B cell (primary cell): ENCODE measurements at regions of chr5 and their contacts with region 1.

Region 1: DNA sequence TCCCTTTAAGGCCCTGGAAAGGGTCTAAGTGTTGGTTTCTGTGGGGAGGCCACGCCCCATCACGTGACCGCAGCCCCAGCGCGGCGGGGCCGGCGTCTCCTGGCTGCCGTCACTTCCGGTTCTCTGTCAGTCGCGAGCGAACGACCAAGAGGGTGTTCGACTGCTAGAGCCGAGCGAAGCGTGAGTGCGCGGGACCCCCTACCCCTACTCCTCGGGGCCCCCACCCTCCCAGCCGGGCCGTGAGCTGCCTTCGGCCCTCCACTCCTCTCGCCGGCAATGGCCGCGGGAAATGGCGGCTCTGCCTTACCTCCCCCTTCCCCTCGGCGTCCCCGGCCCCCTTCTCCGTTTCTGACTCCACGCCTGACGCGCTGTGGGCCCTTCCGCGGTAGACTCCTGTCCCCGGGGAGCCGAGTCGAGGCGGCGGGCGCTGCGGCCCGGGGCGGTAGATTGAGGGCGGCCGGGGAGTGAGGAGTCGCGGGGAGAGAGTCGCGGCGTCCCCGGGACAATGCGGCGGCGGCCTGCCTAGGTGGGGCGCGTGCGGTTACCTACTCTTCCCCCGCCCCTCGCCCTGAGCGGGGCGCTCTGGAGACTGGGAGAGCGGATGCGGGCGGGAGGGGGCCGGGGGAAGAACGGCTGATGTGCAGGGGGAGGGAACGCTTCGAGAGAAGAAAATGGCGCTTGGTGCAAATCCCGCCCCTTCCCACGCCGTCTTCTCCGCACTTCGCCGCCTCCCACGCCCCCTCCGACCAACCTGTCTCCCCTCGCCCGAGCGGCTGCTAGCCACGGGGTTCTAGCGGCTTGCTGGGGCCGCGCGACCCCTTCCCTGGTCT is at the start of gene SUB1:
- DNase-seq: peak; percentile 94
- ATAC-seq: peak; percentile 64
- H3K4me3 ChIP-seq: peak within 1 kb of the TSS; percentile 83 to 93 (median 86)
- H3K4me3 Mint-ChIP-seq: peak within 1 kb of the TSS; percentile 96
- H3K27ac ChIP-seq: peak within 1 kb of the TSS; percentile 96 to 99
- H3K27ac Mint-ChIP-seq: peak within 1 kb of the TSS; percentile 97
- H3K4me1 ChIP-seq: peaks cover 68 to 76% of the 10 kb centered on the region in 2 donors
- H3K4me1 Mint-ChIP-seq: peaks cover 73% of the 10 kb centered on the region
- H3K27me3 ChIP-seq: no peaks in the 10 kb centered on the region
- H3K27me3 Mint-ChIP-seq: no peaks in the 10 kb centered on the region
- CTCF ChIP-seq: no peak
- total RNA-seq, gene SUB1: 117 and 123 TPM in 2 replicates

Region 2: DNA sequence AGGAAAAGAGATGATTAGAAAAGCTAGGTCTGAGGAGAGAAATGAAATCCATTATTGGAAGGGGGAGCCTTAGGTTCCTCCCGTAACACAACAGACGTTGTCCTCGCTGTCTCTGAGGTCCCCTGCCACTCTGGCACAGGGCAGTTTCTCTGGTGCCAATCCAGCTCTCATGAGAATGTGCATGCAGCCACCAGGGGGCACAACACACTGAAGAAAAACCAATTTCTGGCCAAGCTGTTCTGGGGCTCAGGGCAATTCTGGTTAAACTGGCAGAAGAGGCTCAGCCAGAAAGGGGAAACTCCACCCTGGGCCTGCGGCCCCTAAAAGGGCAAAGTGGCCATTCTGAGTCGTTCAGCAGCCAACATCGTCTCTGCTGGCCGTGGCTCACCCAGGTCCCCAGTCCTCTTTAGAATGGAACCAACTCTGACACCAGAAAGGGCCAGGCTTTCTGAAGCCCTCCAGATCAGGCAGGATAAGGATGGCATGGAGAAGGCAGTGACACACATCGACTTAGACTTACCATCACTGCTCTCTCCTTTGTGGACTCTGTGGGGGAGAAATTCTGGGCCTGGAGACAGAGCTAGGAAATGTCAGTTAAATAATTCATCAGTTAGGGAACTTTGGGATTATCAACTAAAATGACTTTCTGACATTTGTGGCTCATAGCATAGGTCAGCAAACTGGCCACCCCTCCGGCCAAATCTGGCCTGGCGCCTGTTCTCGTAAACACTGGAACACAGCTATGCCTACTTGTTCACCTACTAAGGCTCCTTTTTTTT is 353.0 kb before region 1 on chr5:
- CTCF ChIA-PET with region 1: interaction called, 42 read pairs
- POLR2A ChIA-PET with region 1: no interaction called
- intact Hi-C with region 1: loop called (anchors 5 kb)
- DNase-seq: peak; percentile 84
- ATAC-seq: peak; percentile 85
- H3K4me3 ChIP-seq: no peak overlapping the region
- H3K4me3 Mint-ChIP-seq: no peak overlapping the region
- H3K27ac ChIP-seq: peak overlapping the region in 1 of 2 donors; percentile 61
- H3K27ac Mint-ChIP-seq: peak overlapping the region; percentile 73
- H3K4me1 ChIP-seq: peaks cover 0 to 24% of the 10 kb centered on the region in 2 donors
- H3K4me1 Mint-ChIP-seq: peaks cover 21% of the 10 kb centered on the region
- H3K27me3 ChIP-seq: no peaks in the 10 kb centered on the region
- H3K27me3 Mint-ChIP-seq: no peaks in the 10 kb centered on the region
- CTCF ChIP-seq: peak; percentile 78

Region 3: DNA sequence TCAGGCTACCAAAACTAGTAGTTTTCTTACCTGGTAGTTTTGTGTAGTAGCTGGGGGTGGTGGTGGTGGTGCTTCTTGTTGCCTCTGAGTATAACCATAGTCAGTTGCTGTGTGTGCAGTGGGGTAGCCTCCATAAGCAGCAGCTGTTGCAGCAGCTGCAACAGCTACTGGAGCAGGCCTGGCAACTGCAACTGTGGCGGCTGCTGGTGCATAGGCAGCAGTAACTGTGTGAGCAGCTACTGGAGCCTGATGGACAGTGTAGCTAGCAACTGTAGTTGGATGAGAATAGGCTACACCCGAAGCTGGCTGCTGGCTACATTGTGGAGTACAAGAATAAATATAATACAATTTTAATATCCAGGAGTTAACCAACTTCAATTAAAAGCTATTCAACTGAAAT is 165.9 kb before region 1 on chr5:
- CTCF ChIA-PET with region 1: interaction called, 11 read pairs
- POLR2A ChIA-PET with region 1: no interaction called
- intact Hi-C with region 1: no loop called
- DNase-seq: no peak
- ATAC-seq: no peak
- H3K4me3 ChIP-seq: no peak overlapping the region
- H3K4me3 Mint-ChIP-seq: no peak overlapping the region
- H3K27ac ChIP-seq: no peak overlapping the region
- H3K27ac Mint-ChIP-seq: no peak overlapping the region
- H3K4me1 ChIP-seq: no peaks in the 10 kb centered on the region
- H3K4me1 Mint-ChIP-seq: peaks cover 28% of the 10 kb centered on the region
- H3K27me3 ChIP-seq: no peaks in the 10 kb centered on the region
- H3K27me3 Mint-ChIP-seq: no peaks in the 10 kb centered on the region
- CTCF ChIP-seq: no peak

Region 4: DNA sequence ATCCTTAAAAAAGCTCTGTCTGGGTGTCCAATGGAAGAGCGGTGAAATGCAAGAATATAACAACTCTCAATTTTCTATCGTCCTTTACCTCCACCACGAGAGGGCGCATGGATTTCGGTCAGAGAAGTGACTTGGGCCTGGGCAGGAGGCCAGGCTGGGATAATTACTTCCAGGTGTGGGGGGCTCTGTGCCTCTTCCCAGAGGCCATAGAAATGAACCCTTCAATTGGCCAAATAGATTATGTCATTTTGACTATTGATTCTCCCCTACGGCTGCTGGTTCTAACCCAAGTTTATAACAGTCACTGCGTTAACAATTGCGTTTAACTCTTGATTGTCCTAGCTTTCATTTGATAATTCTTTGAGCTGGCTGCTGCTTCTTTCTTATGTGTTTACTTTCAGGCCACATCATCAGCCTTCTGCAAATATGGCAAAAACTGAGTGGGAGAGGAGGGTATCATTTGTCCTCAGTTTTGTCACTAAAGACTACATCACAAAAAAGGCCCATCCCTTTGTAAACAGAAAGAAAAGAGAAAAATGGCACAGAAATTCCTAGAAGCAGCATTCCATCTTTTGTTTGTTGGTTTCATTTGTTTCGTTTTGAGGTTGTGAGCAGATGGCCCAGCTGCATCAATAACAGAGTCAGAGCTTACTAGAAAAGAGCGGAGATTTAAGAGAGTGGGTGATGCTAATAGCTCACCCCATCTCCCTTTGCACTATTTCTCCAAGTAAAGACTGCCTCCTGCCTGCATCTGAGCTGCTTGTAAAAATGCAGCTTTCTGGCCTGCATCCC is 95.7 kb before region 1 on chr5:
- CTCF ChIA-PET with region 1: interaction called, 469 read pairs
- POLR2A ChIA-PET with region 1: interaction called, 9 read pairs
- intact Hi-C with region 1: loop called (anchors 1 kb)
- DNase-seq: peak; percentile 81
- ATAC-seq: peak; percentile 71
- H3K4me3 ChIP-seq: no peak overlapping the region
- H3K4me3 Mint-ChIP-seq: no peak overlapping the region
- H3K27ac ChIP-seq: no peak overlapping the region
- H3K27ac Mint-ChIP-seq: peak overlapping the region; percentile 15
- H3K4me1 ChIP-seq: peaks cover 0 to 5% of the 10 kb centered on the region in 2 donors
- H3K4me1 Mint-ChIP-seq: peaks cover 6% of the 10 kb centered on the region
- H3K27me3 ChIP-seq: peaks cover 0 to 5% (median 0%) of the 10 kb centered on the region in 4 experiments
- H3K27me3 Mint-ChIP-seq: peaks cover 22% of the 10 kb centered on the region
- CTCF ChIP-seq: peak; percentile 84

Region 5: DNA sequence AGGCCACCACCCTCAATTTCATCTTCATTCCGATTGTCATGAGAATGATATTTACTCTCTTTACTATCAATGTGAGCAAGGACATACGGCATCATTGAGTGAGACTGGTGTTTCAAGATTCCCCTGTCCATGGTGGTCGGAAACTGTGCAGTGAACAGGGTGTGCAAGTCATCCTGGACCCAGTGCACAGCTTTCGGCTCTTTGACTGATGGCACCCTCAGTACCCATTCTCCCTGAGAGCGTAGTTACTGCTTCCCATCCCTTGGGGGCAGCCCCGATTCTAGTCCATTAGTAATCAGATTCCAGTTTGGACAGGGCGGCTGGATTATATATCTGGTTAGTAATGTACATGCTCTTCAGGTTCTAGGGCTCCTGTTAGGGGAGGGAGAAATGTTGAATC is 62.0 kb before region 1 on chr5:
- CTCF ChIA-PET with region 1: interaction called, 22 read pairs
- POLR2A ChIA-PET with region 1: no interaction called
- intact Hi-C with region 1: no loop called
- DNase-seq: no peak
- ATAC-seq: no peak
- H3K4me3 ChIP-seq: no peak overlapping the region
- H3K4me3 Mint-ChIP-seq: no peak overlapping the region
- H3K27ac ChIP-seq: no peak overlapping the region
- H3K27ac Mint-ChIP-seq: no peak overlapping the region
- H3K4me1 ChIP-seq: no peaks in the 10 kb centered on the region
- H3K4me1 Mint-ChIP-seq: peaks cover 2% of the 10 kb centered on the region
- H3K27me3 ChIP-seq: no peaks in the 10 kb centered on the region
- H3K27me3 Mint-ChIP-seq: peaks cover 11% of the 10 kb centered on the region
- CTCF ChIP-seq: no peak

Region 6: DNA sequence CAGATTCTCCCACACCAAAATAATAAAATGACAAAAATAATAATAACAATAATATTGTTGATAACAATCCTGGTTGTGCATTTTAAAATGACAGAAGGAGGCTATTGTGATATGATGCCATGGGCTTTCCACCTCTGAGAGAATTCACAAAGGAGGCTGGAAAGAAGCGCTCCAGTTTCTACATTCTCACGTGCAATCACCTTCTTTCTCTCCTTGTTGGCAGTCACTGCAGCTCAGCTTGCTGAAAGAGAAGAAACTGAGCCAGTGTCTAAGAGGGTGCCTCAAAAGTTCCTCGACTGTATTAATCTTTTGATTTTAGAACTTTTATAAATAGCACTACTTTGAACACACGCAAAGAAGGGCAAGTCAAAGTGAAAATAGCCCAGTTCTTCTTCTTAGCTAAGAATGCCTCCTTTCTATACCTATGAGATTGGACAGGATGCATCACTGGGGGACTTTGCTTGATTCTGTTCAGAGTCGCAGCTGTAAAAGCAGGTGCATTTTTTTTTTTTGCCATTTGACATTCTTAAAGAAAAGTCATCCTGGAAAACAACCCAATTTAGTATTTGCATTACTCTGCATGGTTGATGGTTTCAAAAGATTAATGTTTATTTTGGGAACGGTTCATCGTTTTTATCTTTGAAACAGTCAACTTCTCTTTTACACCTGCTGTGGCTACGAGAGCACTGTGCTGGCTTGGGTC is 12.7 kb before region 1 on chr5:
- CTCF ChIA-PET with region 1: interaction called, 22 read pairs
- POLR2A ChIA-PET with region 1: interaction called, 6 read pairs
- intact Hi-C with region 1: no loop called
- DNase-seq: peak; percentile 59
- ATAC-seq: peak; percentile 80
- H3K4me3 ChIP-seq: peak overlapping the region; percentile 5 to 27 (median 7)
- H3K4me3 Mint-ChIP-seq: peak overlapping the region; percentile 50
- H3K27ac ChIP-seq: peak overlapping the region; percentile 35 to 49
- H3K27ac Mint-ChIP-seq: peak overlapping the region; percentile 26
- H3K4me1 ChIP-seq: peaks cover 23 to 34% of the 10 kb centered on the region in 2 donors
- H3K4me1 Mint-ChIP-seq: peaks cover 22% of the 10 kb centered on the region
- H3K27me3 ChIP-seq: no peaks in the 10 kb centered on the region
- H3K27me3 Mint-ChIP-seq: no peaks in the 10 kb centered on the region
- CTCF ChIP-seq: no peak

Region 7: DNA sequence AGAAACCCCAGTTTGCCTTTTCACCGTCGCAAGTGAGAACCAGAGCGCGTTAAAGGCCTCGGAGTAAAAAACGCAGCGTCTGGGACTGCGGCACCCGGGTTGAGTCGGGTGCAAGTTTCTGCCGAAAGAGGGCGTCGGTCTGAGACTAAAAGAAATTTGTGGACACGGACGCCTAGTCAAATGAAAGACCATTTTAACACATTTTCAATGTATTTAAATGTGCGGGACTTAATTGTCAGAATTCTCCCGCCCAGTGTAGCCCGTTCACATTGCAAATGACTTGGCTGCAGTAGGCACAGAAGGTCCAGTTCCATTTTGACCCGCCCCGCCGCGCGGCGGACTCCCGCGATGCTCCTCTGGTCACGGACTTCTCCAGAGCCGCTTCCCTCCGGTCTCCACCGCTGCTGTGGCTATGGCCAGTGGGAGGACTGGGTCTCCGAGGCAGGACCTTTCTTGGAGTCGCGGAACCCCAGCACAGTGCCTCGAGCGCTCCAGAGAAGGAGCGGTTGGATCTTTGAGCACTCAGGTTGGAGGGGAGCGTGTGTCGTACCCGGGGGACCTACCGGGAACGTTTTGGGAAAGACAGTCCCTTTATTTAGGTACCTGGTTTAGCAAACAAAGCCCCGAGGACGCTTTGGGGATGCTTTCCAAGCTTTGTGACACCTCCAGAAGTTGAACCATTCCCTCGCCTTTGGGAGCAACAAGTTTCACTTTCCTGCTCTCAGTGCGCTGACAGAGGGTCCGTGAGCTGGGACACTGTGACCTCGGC is 124.3 kb after region 1 on chr5:
- CTCF ChIA-PET with region 1: no interaction called
- POLR2A ChIA-PET with region 1: no interaction called
- intact Hi-C with region 1: no loop called
- DNase-seq: peak; percentile 61
- ATAC-seq: no peak
- H3K4me3 ChIP-seq: peak overlapping the region; percentile 37 to 74 (median 59)
- H3K4me3 Mint-ChIP-seq: peak overlapping the region; percentile 71
- H3K27ac ChIP-seq: no peak overlapping the region
- H3K27ac Mint-ChIP-seq: no peak overlapping the region
- H3K4me1 ChIP-seq: peaks cover 35 to 48% of the 10 kb centered on the region in 2 donors
- H3K4me1 Mint-ChIP-seq: peaks cover 35% of the 10 kb centered on the region
- H3K27me3 ChIP-seq: peaks cover 0 to 42% (median 21%) of the 10 kb centered on the region in 4 experiments
- H3K27me3 Mint-ChIP-seq: peaks cover 61% of the 10 kb centered on the region
- CTCF ChIP-seq: peak; percentile 33

Region 8: GRCh38 chr5:32734827-32735378 is 149.2 kb after region 1 on chr5:
- CTCF ChIA-PET with region 1: no interaction called
- POLR2A ChIA-PET with region 1: no interaction called
- intact Hi-C with region 1: no loop called
- DNase-seq: no peak
- ATAC-seq: no peak
- H3K4me3 ChIP-seq: no peak overlapping the region
- H3K4me3 Mint-ChIP-seq: no peak overlapping the region
- H3K27ac ChIP-seq: no peak overlapping the region
- H3K27ac Mint-ChIP-seq: no peak overlapping the region
- H3K4me1 ChIP-seq: no peaks in the 10 kb centered on the region
- H3K4me1 Mint-ChIP-seq: no peaks in the 10 kb centered on the region
- H3K27me3 ChIP-seq: peaks cover 0 to 3% (median 0%) of the 10 kb centered on the region in 4 experiments
- H3K27me3 Mint-ChIP-seq: peaks cover 18% of the 10 kb centered on the region
- CTCF ChIP-seq: no peak

Region 9: GRCh38 chr5:32996336-32996735 is 410.7 kb after region 1 on chr5:
- CTCF ChIA-PET with region 1: no interaction called
- POLR2A ChIA-PET with region 1: no interaction called
- intact Hi-C with region 1: no loop called
- DNase-seq: no peak
- ATAC-seq: no peak
- H3K4me3 ChIP-seq: no peak overlapping the region
- H3K4me3 Mint-ChIP-seq: no peak overlapping the region
- H3K27ac ChIP-seq: no peak overlapping the region
- H3K27ac Mint-ChIP-seq: no peak overlapping the region
- H3K4me1 ChIP-seq: no peaks in the 10 kb centered on the region
- H3K4me1 Mint-ChIP-seq: no peaks in the 10 kb centered on the region
- H3K27me3 ChIP-seq: no peaks in the 10 kb centered on the region
- H3K27me3 Mint-ChIP-seq: no peaks in the 10 kb centered on the region
- CTCF ChIP-seq: no peak